Cardiac septum (tissue), 1 donor: ENCODE measurements at regions of chr1 and their contacts with region 1.

Region 1: GRCh38 chr1:941588-942383 is 17.3 kb downstream of the NOC2L start:
- DNase-seq: peak; percentile 86

Region 2: GRCh38 chr1:904310-904950 is 37.4 kb before region 1 on chr1:
- intact Hi-C with region 1: loop called (anchors 2 kb)
- DNase-seq: peak; percentile 92

Region 3: DNA sequence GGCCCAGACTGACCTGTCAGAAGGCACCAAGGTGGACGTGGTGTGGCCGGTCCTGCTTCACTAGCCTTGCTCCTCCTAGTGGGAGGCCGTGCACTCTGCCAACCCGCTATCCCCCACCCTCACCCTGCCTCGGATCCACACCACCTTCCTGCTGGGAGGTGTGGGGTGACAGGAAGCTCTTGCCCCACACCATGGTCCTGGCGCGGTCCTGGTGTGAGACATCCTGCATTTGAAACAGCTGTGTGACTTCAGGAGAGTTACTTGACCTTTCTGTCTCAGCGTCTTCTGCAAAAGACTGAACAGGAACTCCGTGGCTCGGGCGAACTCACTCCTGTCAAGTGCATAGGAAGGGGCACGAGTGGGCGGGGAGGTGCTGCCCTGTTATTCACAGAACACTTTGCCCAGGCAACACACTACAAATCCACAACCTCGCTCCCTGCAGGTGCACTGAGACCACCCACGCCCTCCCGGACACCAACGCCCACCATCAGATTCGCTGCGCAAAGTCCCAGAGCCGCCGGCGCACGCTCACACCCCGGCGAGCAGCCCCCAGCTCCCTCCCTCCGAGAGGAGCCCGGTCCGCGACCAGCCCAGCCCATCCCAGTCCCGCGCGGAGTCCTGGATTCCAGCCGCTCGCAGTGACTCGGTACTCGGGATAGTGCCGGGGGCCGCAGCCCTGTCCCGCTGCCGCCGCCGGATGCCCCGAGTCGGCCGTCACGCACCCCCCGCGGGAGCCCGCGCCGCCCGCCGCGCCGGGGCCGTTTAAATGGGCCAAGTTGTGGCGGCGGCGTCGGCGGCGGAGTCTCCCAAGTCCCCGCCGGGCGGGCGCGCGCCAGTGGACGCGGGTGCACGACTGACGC is 18.4 kb before region 1 on chr1 and contains the start of gene SAMD11:
- intact Hi-C with region 1: loop called (anchors 2 kb)
- DNase-seq: peak; percentile 84
- total RNA-seq, gene SAMD11: 10.2 TPM